Activated B cell treated with CpG ODN at 0.5 μM for 24 hours (primary cell): ENCODE measurements at regions of chr9 and their contacts with region 1.

Region 1: GRCh38 chr9:127916665-127917613 is at the start of gene ST6GALNAC4:
- DNase-seq: peak; percentile 94
- ATAC-seq: peak; percentile 83
- H3K4me3 Mint-ChIP-seq: peak within 1 kb of the TSS; percentile 88
- H3K27ac Mint-ChIP-seq: peak within 1 kb of the TSS; percentile 95
- H3K4me1 Mint-ChIP-seq: peaks cover 74% of the 10 kb centered on the region
- H3K27me3 Mint-ChIP-seq: no peaks in the 10 kb centered on the region
- CTCF ChIP-seq: no peak
- total RNA-seq, gene ST6GALNAC4: 71.3 and 85.4 TPM in 2 replicates

Region 2: GRCh38 chr9:127224178-127224882 is 692.6 kb before region 1 on chr9:
- CTCF ChIA-PET with region 1: no interaction called
- POLR2A ChIA-PET with region 1: interaction called, 5 read pairs
- intact Hi-C with region 1: loop called (anchors 1 kb)
- DNase-seq: peak; percentile 94
- ATAC-seq: peak; percentile 79
- H3K4me3 Mint-ChIP-seq: peak overlapping the region; percentile 85
- H3K27ac Mint-ChIP-seq: peak overlapping the region; percentile 73
- H3K4me1 Mint-ChIP-seq: peaks cover 41% of the 10 kb centered on the region
- H3K27me3 Mint-ChIP-seq: peaks cover 3% of the 10 kb centered on the region
- CTCF ChIP-seq: no peak

Region 3: DNA sequence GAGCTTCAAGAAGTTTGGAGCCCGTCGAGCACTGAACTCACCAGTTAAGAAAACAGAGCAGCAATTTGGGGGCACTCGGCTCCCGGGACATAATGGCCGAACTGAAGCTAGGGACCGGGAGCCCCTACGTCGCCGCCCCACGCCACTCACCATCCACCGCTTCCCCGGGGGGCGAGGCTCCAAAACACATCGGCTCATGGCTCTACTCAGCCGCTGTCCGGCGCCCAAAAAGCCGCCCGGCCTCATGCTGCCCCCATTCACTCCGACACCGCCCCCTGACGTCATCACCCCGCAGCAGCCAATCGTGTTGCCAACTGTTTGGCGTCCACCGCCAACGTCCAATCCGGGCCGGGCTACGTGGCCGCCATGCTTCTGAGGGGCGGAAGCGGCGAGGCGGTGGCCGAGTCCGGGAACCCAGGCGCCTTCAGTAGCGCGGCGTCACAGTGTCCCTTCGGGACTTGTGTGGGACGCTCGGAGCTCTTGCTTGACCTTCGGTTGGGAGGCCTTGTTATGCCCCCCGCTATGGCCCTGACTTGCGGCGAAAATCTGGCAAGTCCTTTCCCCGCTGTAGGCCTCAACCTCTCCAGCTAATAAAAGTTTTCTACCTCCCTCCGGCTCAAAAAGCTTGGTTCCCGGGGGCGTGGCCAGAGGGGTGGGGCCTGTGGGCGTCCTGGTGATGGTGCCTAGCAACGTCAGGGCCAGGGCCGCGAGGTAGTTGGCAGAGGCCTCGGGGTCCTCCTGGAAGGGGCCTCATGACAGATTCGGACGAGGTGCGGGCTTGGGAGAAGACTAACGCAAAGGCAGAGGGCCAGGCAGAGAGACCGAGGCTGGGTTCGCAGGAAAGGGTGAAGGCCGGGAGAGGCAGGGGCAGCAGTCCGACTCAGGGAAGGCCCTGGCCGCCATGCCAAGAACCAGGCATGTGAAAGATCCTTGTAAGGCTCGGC is 201.3 kb before region 1 on chr9 and contains the starts of genes PTRH1 and TTC16:
- CTCF ChIA-PET with region 1: no interaction called
- POLR2A ChIA-PET with region 1: interaction called, 5 read pairs
- intact Hi-C with region 1: loop called (anchors 1 kb)
- DNase-seq: peak; percentile 97
- ATAC-seq: peak; percentile 96
- H3K4me3 Mint-ChIP-seq: peak within 1 kb of the TSS; percentile 100
- H3K27ac Mint-ChIP-seq: peak within 1 kb of the TSS; percentile 92
- H3K4me1 Mint-ChIP-seq: peaks cover 21% of the 10 kb centered on the region
- H3K27me3 Mint-ChIP-seq: no peaks in the 10 kb centered on the region
- CTCF ChIP-seq: no peak
- total RNA-seq, gene PTRH1: 12.7 and 13.8 TPM in 2 replicates
- total RNA-seq, gene TTC16: not detected in 2 replicates

Region 4: GRCh38 chr9:127785023-127785932 is 131.7 kb before region 1 on chr9:
- CTCF ChIA-PET with region 1: interaction called, 3 read pairs
- POLR2A ChIA-PET with region 1: interaction called, 65 read pairs
- intact Hi-C with region 1: loop called (anchors 1 kb)
- DNase-seq: peak; percentile 92
- ATAC-seq: peak; percentile 56
- H3K4me3 Mint-ChIP-seq: peak overlapping the region; percentile 92
- H3K27ac Mint-ChIP-seq: peak overlapping the region; percentile 97
- H3K4me1 Mint-ChIP-seq: peaks cover 63% of the 10 kb centered on the region
- H3K27me3 Mint-ChIP-seq: no peaks in the 10 kb centered on the region
- CTCF ChIP-seq: peak; percentile 43

Region 5: GRCh38 chr9:127869310-127870152 is 47.4 kb before region 1 on chr9:
- CTCF ChIA-PET with region 1: interaction called, 48 read pairs
- POLR2A ChIA-PET with region 1: interaction called, 7 read pairs
- intact Hi-C with region 1: loop called (anchors 1 kb)
- DNase-seq: peak; percentile 81
- ATAC-seq: peak; percentile 79
- H3K4me3 Mint-ChIP-seq: no peak overlapping the region
- H3K27ac Mint-ChIP-seq: no peak overlapping the region
- H3K4me1 Mint-ChIP-seq: peaks cover 22% of the 10 kb centered on the region
- H3K27me3 Mint-ChIP-seq: no peaks in the 10 kb centered on the region
- CTCF ChIP-seq: no peak

Region 6: DNA sequence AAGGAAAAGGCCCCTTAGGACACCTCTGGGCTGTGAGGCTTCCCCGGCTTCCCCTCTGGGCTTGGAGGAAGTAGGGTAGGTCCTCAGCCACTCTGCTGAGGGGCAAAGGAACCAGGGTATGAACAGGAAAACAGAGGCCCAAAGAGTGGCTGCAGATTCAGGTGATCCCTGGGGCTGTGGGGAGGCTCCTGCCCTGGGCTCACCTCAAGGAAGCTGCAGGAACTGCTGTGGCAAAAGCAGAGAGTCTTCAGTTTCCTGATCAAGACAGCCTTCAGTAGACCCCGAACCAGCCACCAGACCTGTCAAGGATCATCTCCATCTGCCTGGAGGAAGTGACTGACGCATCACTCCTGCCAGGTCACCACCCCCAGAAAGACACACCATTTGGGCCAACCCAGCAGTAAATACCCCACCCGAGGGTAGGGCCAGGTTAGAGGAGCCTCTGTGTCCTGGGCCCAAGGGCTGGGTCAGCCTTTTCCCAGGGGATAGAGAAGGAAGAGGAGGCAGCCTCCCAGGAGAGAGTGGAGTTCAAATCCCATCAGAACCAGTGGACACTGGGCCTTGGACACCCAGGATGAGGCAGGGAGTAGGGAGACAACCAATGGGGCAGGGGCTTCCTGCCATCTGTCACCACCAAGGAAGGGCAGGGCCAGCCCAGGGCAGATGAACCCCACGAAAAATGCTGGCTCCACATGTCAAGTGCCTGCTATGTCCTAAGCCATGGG is 11.8 kb before region 1 on chr9:
- CTCF ChIA-PET with region 1: interaction called, 21 read pairs
- POLR2A ChIA-PET with region 1: interaction called, 457 read pairs
- intact Hi-C with region 1: loop called (anchors 1 kb)
- DNase-seq: peak; percentile 39
- ATAC-seq: peak; percentile 50
- H3K4me3 Mint-ChIP-seq: peak overlapping the region; percentile 80
- H3K27ac Mint-ChIP-seq: peak overlapping the region; percentile 98
- H3K4me1 Mint-ChIP-seq: peaks cover 72% of the 10 kb centered on the region
- H3K27me3 Mint-ChIP-seq: no peaks in the 10 kb centered on the region
- CTCF ChIP-seq: no peak

Region 7: GRCh38 chr9:127963359-127964064 is 46.6 kb after region 1 on chr9:
- CTCF ChIA-PET with region 1: no interaction called
- POLR2A ChIA-PET with region 1: no interaction called
- intact Hi-C with region 1: no loop called
- DNase-seq: no peak
- ATAC-seq: peak; percentile 27
- H3K4me3 Mint-ChIP-seq: no peak overlapping the region
- H3K27ac Mint-ChIP-seq: peak overlapping the region; percentile 81
- H3K4me1 Mint-ChIP-seq: peaks cover 93% of the 10 kb centered on the region
- H3K27me3 Mint-ChIP-seq: no peaks in the 10 kb centered on the region
- CTCF ChIP-seq: no peak

Region 8: GRCh38 chr9:127991042-127991756 is 74.3 kb after region 1 on chr9:
- CTCF ChIA-PET with region 1: no interaction called
- POLR2A ChIA-PET with region 1: no interaction called
- intact Hi-C with region 1: no loop called
- DNase-seq: no peak
- ATAC-seq: peak; percentile 45
- H3K4me3 Mint-ChIP-seq: no peak overlapping the region
- H3K27ac Mint-ChIP-seq: peak overlapping the region; percentile 32
- H3K4me1 Mint-ChIP-seq: peaks cover 39% of the 10 kb centered on the region
- H3K27me3 Mint-ChIP-seq: no peaks in the 10 kb centered on the region
- CTCF ChIP-seq: no peak

Region 9: DNA sequence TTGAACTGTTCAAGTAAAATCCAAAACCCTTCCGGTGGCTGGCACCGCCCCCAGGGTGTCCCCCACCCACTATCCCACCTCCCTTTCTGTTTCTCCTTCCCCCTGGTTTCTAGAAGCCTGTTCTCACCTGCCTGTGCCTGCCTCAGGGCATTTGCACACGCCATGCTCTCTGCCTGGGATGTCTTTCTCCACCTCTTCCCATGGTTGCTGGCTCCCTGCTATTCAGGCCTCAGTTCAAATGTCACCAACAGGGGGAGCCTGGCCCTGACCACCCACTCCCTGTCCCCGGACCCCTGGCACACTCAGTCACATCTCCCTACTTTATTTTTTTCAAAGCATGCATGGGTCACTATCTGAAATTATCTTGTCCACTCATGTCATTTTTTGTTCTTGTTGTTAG is 103.8 kb after region 1 on chr9:
- CTCF ChIA-PET with region 1: no interaction called
- POLR2A ChIA-PET with region 1: no interaction called
- intact Hi-C with region 1: no loop called
- DNase-seq: no peak
- ATAC-seq: no peak
- H3K4me3 Mint-ChIP-seq: no peak overlapping the region
- H3K27ac Mint-ChIP-seq: no peak overlapping the region
- H3K4me1 Mint-ChIP-seq: peaks cover 38% of the 10 kb centered on the region
- H3K27me3 Mint-ChIP-seq: no peaks in the 10 kb centered on the region
- CTCF ChIP-seq: no peak

Region 10: DNA sequence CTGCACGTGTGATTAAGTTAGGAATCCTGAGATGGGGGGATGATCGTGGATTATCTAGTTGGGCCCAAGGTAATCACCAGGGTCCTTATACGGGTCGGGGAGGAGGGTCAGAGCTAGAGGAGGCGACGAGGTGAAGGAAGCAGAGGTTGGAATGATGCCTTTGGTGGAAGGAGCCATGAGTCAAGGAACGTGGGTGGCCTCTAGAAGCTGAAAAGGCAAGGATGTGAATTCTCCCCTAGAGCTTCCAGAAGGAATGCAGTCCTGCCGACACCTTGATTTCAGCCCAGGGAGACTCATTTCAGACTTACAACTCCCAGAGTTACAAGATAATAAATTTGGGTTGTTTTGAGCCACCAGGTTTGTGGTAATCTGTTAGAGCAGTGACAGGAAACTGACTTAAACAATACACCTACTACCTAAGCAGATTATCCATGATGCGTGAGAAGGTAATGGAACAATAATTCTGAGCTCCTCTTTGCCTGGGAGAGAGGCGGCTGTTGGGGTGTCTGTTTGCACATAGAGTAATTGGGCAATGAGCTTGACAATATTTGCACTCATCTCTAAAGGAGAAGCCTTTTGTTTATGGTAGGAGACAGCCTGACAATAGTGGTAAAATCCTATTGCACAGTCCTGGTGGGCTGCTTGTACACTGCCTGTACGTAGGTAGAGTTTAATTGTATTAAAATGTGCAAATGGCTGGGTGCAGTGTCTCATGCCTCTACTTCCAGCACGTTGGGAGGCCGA is 1390.5 kb after region 1 on chr9:
- CTCF ChIA-PET with region 1: no interaction called
- POLR2A ChIA-PET with region 1: no interaction called
- intact Hi-C with region 1: no loop called
- DNase-seq: no peak
- ATAC-seq: no peak
- H3K4me3 Mint-ChIP-seq: no peak overlapping the region
- H3K27ac Mint-ChIP-seq: peak overlapping the region; percentile 18
- H3K4me1 Mint-ChIP-seq: no peaks in the 10 kb centered on the region
- H3K27me3 Mint-ChIP-seq: peaks cover 30% of the 10 kb centered on the region
- CTCF ChIP-seq: no peak